Heart right ventricle (tissue), 16 donors: ENCODE measurements at regions of chr10 and their contacts with region 1.

Region 1: GRCh38 chr10:28302638-28303488 is at the start of gene MPP7:
- DNase-seq: peak; percentile 93 to 96
- ATAC-seq: peak; percentile 98 to 100 (median 99)
- H3K4me3 ChIP-seq: peak within 1 kb of the TSS; percentile 39 to 98 (median 89)
- H3K27ac ChIP-seq: peak within 1 kb of the TSS; percentile 64 to 90 (median 84)
- H3K4me1 ChIP-seq: peaks cover 0 to 32% (median 12%) of the 10 kb centered on the region in 9 donors
- H3K27me3 ChIP-seq: peaks cover 0 to 23% (median 11%) of the 10 kb centered on the region in 7 donors
- CTCF ChIP-seq: peak in 7 of 9 donors; percentile 14 to 57 (median 52)
- total RNA-seq, gene MPP7: 10.4 to 20.0 (median 15.1) TPM

Region 2: GRCh38 chr10:28326516-28327490 is 23.9 kb after region 1 on chr10:
- intact Hi-C with region 1: loop called in 2 of 10 experiments (anchors 1 kb)
- DNase-seq: peak; percentile 20 to 81
- ATAC-seq: peak; percentile 85 to 96 (median 92)
- H3K4me3 ChIP-seq: peak overlapping the region in 5 of 10 donors; percentile 9 to 32 (median 17)
- H3K27ac ChIP-seq: peak overlapping the region; percentile 42 to 90 (median 80)
- H3K4me1 ChIP-seq: peaks cover 2 to 37% (median 20%) of the 10 kb centered on the region in 9 donors
- H3K27me3 ChIP-seq: no peaks in the 10 kb centered on the region
- CTCF ChIP-seq: no peak

Region 3: GRCh38 chr10:28375399-28376369 is 72.8 kb after region 1 on chr10:
- intact Hi-C with region 1: loop called in 6 of 10 experiments (anchors 2 to 5 kb)
- DNase-seq: no peak
- ATAC-seq: peak in 3 of 8 donors; percentile 47 to 87 (median 75)
- H3K4me3 ChIP-seq: no peak overlapping the region
- H3K27ac ChIP-seq: peak overlapping the region in 1 of 10 donors; percentile 16
- H3K4me1 ChIP-seq: peaks cover 0 to 28% (median 0%) of the 10 kb centered on the region in 9 donors
- H3K27me3 ChIP-seq: no peaks in the 10 kb centered on the region
- CTCF ChIP-seq: no peak

Region 4: GRCh38 chr10:28381903-28382347 is 79.1 kb after region 1 on chr10:
- intact Hi-C with region 1: loop called in 8 of 10 experiments (anchors 2 to 5 kb)
- DNase-seq: peak; percentile 47 to 79
- ATAC-seq: peak; percentile 77 to 93 (median 86)
- H3K4me3 ChIP-seq: no peak overlapping the region
- H3K27ac ChIP-seq: no peak overlapping the region
- H3K4me1 ChIP-seq: peaks cover 0 to 22% (median 0%) of the 10 kb centered on the region in 9 donors
- H3K27me3 ChIP-seq: peaks cover 0 to 8% (median 3%) of the 10 kb centered on the region in 7 donors
- CTCF ChIP-seq: peak; percentile 77 to 95 (median 92)

Region 5: DNA sequence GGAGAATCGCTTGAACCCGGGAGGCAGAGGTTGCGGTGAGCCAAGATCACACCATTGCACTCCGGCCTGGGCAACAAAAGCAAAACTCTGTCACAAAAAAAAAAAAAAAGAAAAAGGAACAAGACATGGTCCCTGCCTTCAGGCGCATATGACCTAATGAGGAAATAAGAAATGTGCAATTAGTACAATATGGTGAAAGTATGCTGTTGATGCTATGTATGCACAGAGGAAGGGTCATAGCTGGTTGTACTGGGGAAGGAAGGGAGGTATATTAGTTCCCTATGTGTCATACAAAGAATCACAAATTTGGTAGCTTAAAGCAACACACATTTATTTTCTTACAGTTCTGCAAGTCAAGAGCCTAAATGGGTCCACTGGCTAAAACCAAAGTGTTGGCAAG is 97.8 kb after region 1 on chr10:
- intact Hi-C with region 1: no loop called
- DNase-seq: no peak
- ATAC-seq: peak in 2 of 8 donors; percentile 44 to 54
- H3K4me3 ChIP-seq: no peak overlapping the region
- H3K27ac ChIP-seq: peak overlapping the region in 1 of 10 donors; percentile 58
- H3K4me1 ChIP-seq: peaks cover 0 to 37% (median 0%) of the 10 kb centered on the region in 9 donors
- H3K27me3 ChIP-seq: peaks cover 0 to 9% (median 0%) of the 10 kb centered on the region in 7 donors
- CTCF ChIP-seq: no peak